CD8-positive, alpha-beta memory T cell (primary cell): ENCODE measurements at regions of chr11 and their contacts with region 1.

Region 1: GRCh38 chr11:58513747-58514367 is 6.0 kb upstream of the OR5B21 start:
- DNase-seq: peak in 1 of 5 donors; percentile 36
- H3K4me3 ChIP-seq: no peak overlapping the region
- H3K4me3 Mint-ChIP-seq: no peak overlapping the region
- H3K27ac ChIP-seq: no peak overlapping the region
- H3K27ac Mint-ChIP-seq: peak overlapping the region in 1 of 8 donors; percentile 17
- H3K4me1 ChIP-seq: no peaks in the 10 kb centered on the region
- H3K4me1 Mint-ChIP-seq: no peaks in the 10 kb centered on the region
- H3K27me3 ChIP-seq: no peaks in the 10 kb centered on the region
- H3K27me3 Mint-ChIP-seq: no peaks in the 10 kb centered on the region

Region 2: GRCh38 chr11:58524232-58525036 is 10.6 kb after region 1 on chr11:
- CTCF ChIA-PET with region 1: interaction called, 12 read pairs
- POLR2A ChIA-PET with region 1: no interaction called
- DNase-seq: peak; percentile 10 to 73 (median 53)
- H3K4me3 ChIP-seq: peak overlapping the region; percentile 41
- H3K4me3 Mint-ChIP-seq: peak overlapping the region; percentile 9 to 81 (median 69)
- H3K27ac ChIP-seq: peak overlapping the region; percentile 69
- H3K27ac Mint-ChIP-seq: peak overlapping the region; percentile 85 to 97 (median 94)
- H3K4me1 ChIP-seq: peaks cover 52% of the 10 kb centered on the region
- H3K4me1 Mint-ChIP-seq: peaks cover 33 to 63% (median 61%) of the 10 kb centered on the region in 3 donors
- H3K27me3 ChIP-seq: no peaks in the 10 kb centered on the region
- H3K27me3 Mint-ChIP-seq: no peaks in the 10 kb centered on the region

Region 3: GRCh38 chr11:58546841-58547240 is 33.0 kb after region 1 on chr11:
- CTCF ChIA-PET with region 1: no interaction called
- POLR2A ChIA-PET with region 1: no interaction called
- DNase-seq: no peak
- H3K4me3 ChIP-seq: no peak overlapping the region
- H3K4me3 Mint-ChIP-seq: no peak overlapping the region
- H3K27ac ChIP-seq: no peak overlapping the region
- H3K27ac Mint-ChIP-seq: peak overlapping the region in 5 of 8 donors; percentile 15 to 75 (median 64)
- H3K4me1 ChIP-seq: peaks cover 3% of the 10 kb centered on the region
- H3K4me1 Mint-ChIP-seq: peaks cover 15 to 44% (median 36%) of the 10 kb centered on the region in 3 donors
- H3K27me3 ChIP-seq: no peaks in the 10 kb centered on the region
- H3K27me3 Mint-ChIP-seq: no peaks in the 10 kb centered on the region

Region 4: GRCh38 chr11:58578635-58579191 is 64.9 kb after region 1 on chr11 and contains the start of gene ZFP91:
- CTCF ChIA-PET with region 1: no interaction called
- POLR2A ChIA-PET with region 1: no interaction called
- DNase-seq: peak; percentile 91 to 98 (median 95)
- H3K4me3 ChIP-seq: peak within 1 kb of the TSS; percentile 83
- H3K4me3 Mint-ChIP-seq: peak within 1 kb of the TSS; percentile 88 to 99 (median 98)
- H3K27ac ChIP-seq: peak within 1 kb of the TSS; percentile 99
- H3K27ac Mint-ChIP-seq: peak within 1 kb of the TSS; percentile 99 to 100 (median 100)
- H3K4me1 ChIP-seq: peaks cover 63% of the 10 kb centered on the region
- H3K4me1 Mint-ChIP-seq: peaks cover 73 to 82% (median 81%) of the 10 kb centered on the region in 3 donors
- H3K27me3 ChIP-seq: no peaks in the 10 kb centered on the region
- H3K27me3 Mint-ChIP-seq: peaks cover 0 to 16% of the 10 kb centered on the region in 2 donors
- total RNA-seq, gene ZFP91: 61.0 to 61.7 TPM